ENCODE measurements at regions of chr1 and their contacts with region 1.

Region 1: GRCh38 chr1:6409053-6409452 is 10.7 kb downstream of the HES2 start:
- DNase-seq: no peak
- ATAC-seq: no peak
- H3K4me3 ChIP-seq: no peak overlapping the region
- H3K27ac ChIP-seq: no peak overlapping the region
- H3K4me1 ChIP-seq: no peaks in the 10 kb centered on the region
- H3K27me3 ChIP-seq: peaks cover 0 to 54% (median 35%) of the 10 kb centered on the region in 7 donors
- CTCF ChIP-seq: no peak

Region 2: GRCh38 chr1:6343506-6344405 is 65.3 kb before region 1 on chr1:
- intact Hi-C with region 1: loop called in 6 of 10 experiments (anchors 1 to 5 kb)
- DNase-seq: peak; percentile 61
- ATAC-seq: peak; percentile 72 to 85 (median 78)
- H3K4me3 ChIP-seq: no peak overlapping the region
- H3K27ac ChIP-seq: no peak overlapping the region
- H3K4me1 ChIP-seq: peaks cover 0 to 13% (median 7%) of the 10 kb centered on the region in 9 donors
- H3K27me3 ChIP-seq: no peaks in the 10 kb centered on the region
- CTCF ChIP-seq: peak; percentile 67 to 90 (median 83)

Region 3: DNA sequence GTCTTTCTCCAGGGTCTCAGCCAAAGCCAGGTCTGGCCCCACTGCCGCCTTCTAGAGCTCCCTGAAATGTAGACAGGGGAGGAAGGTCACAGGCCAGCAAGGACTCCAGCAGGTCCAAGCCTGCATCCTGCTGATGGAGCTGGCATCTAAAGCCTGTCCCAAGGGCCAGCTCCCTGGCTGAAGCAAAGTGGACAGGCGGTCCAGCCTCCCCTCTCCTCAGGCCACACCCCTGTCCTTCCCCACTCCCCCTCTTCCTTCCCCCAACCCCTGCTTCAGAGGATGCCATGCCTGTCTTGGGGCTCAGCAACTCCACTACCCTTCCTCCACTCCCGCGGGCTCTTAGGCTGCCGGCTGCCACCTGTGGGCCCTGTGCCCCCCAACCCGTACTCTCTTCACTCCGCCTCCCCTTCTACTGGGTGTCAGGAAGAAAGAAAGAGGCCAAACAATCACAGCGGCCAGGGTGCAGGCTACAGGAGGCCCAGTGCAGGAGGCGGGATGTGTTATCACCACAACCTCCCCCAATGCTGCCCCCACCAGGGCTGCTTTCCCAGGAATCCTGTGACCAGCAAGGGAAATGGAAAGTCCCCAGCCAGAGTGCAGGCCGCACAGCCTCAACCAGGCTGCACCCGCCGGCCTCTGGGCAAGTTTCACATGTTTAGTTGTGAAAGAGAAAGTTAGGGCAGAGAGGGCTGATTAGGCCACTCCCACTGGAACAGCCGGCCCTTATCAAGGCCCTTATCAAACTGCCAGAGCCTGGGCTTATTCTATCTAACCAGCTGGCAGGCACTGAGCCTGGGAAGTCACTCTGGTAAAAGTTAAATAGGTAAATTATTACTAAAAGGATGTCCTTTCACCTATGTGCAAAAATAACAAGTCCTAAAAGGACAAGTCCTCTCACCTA is 49.6 kb before region 1 on chr1:
- intact Hi-C with region 1: loop called in 9 of 10 experiments (anchors 2 to 5 kb)
- DNase-seq: peak; percentile 59 to 68
- ATAC-seq: peak; percentile 33 to 82 (median 75)
- H3K4me3 ChIP-seq: peak overlapping the region in 5 of 10 donors; percentile 1 to 22 (median 17)
- H3K27ac ChIP-seq: peak overlapping the region; percentile 1 to 87 (median 80)
- H3K4me1 ChIP-seq: peaks cover 14 to 39% (median 32%) of the 10 kb centered on the region in 9 donors
- H3K27me3 ChIP-seq: no peaks in the 10 kb centered on the region
- CTCF ChIP-seq: peak in 2 of 9 donors; percentile 10 to 26

Measured in heart right ventricle (tissue), 16 donors.